Activated CD8-positive, alpha-beta T cell treated with anti-CD3 and anti-CD28 coated beads, Interleukin-2, amount 10 ng/mL, durations not matched to agents 7 days and 5 days (primary cell): ENCODE measurements at regions of chr19 and their contacts with region 1.

Region 1: GRCh38 chr19:10000171-10000826 is 10.0 kb downstream of the COL5A3 start:
- DNase-seq: peak; percentile 73
- ATAC-seq: peak; percentile 60
- H3K4me3 Mint-ChIP-seq: no peak overlapping the region
- H3K27ac Mint-ChIP-seq: no peak overlapping the region
- H3K4me1 Mint-ChIP-seq: peaks cover 11% of the 10 kb centered on the region
- H3K27me3 Mint-ChIP-seq: peaks cover 7% of the 10 kb centered on the region

Region 2: DNA sequence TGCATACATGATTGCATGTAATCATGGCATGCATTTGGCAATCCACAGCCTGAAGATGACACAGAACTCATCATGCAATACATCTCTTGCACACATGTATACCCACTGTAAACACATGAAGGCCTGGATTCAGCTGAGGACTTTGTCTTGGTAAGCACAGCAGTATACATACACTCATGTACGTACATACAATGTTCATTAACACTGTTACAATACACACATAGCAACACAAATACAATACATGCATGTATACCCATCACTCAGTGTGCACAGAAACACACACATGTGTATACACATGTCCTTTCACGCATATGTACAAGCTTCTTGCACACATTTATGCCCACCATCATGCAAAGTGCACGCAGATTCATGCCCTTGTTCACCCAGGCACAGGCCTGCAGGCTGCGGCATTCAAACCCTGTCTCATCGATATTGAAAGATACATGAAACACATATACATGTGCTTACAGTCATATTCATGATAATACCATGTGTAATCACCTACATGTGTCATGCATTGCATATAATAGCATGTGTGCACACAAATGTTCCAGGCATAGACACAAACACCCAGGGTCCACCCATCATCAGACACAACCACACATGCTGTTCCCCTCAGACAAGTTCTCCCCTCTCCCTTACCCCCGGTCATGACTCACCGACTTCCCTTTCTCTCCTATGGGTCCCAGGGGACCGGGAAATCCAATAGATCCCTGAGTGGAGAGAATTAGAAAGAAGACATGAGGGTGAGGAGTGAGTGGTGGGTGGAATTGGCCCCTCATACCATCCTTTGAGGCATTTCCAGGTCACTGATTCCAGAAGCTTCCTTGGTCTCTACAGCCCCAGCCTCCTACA is 18.7 kb before region 1 on chr19:
- CTCF ChIA-PET with region 1: interaction called, 15 read pairs
- POLR2A ChIA-PET with region 1: no interaction called
- DNase-seq: no peak
- ATAC-seq: no peak
- H3K4me3 Mint-ChIP-seq: no peak overlapping the region
- H3K27ac Mint-ChIP-seq: no peak overlapping the region
- H3K4me1 Mint-ChIP-seq: no peaks in the 10 kb centered on the region
- H3K27me3 Mint-ChIP-seq: peaks cover 8% of the 10 kb centered on the region